AG04450 (cell line): ENCODE measurements at regions of chr3 and their contacts with region 1.

Region 1: DNA sequence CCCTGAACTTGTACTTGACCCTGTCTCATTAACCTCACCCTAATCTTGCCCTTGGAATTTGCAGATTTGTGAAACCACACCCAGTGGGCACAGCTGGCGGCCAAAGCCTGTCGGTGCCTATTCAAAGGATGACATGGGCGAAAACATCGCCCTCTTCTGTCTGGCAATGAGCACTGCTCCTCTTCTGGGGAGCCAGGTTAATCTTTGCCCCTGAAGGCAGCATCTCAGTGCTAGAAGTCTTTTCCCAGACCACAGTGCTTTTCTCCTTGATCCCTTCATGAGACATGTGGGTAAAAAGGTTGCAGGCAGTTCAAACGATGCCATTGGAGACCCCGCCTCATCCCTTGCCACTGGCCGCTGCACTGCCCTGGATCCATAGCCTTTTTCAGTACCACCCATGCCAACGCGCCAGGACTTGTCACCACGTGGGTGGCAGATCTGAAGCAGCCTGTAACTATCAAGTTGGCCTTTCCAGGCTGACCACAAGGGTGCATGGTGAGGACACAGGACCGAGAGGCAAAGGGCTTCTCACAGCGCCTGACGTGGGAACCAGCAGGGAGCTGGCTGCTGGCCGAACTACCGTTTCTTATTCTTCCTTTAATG is 6.5 kb upstream of the DNASE1L3 start:
- DNase-seq: no peak
- H3K4me3 ChIP-seq: no peak overlapping the region
- H3K27ac ChIP-seq: no peak overlapping the region
- H3K27me3 ChIP-seq: peaks cover 20% of the 10 kb centered on the region
- CTCF ChIP-seq: peak; percentile 86

Region 2: DNA sequence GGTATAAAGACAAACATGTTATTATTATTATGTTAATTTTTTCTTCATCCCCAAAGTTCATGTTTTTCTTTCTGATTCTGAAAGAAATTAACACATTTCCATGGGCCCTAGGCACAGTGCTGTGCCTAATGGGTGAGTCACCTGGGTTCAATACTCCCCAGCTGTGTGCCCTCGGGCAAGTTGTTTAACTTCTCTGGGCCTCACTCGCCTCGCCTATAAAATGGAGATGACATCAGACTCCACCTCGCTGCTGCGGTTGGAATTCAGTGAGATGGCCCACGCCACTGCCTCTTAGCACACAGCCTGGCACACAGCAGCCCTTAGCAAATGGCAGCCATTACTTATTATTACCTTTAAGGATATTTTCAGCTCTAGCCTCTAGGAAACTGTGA is 29.1 kb before region 1 on chr3:
- CTCF ChIA-PET with region 1: interaction called, 50 read pairs
- POLR2A ChIA-PET with region 1: interaction called, 3 read pairs
- DNase-seq: no peak
- H3K4me3 ChIP-seq: no peak overlapping the region
- H3K27ac ChIP-seq: no peak overlapping the region
- H3K27me3 ChIP-seq: peaks cover 2% of the 10 kb centered on the region
- CTCF ChIP-seq: no peak

Region 3: DNA sequence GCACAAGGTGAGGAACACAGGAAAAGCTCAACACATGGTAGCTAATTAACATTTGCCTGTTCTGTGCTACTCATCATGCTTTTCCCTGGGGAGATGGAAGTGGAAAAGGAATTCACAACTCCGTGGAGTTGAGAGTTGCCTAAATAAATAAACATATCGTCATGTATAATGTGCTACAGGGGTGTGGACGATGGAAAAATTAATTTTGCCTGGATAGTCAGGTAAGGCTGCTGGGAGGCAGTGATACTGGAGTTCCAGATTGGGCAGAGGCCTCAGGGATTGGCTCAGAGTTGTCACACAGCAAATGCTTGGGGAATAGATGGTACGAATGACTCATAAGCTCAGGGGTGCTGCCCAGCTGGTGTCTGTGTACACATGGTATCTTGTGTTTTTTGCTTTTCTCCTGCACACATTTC is 17.2 kb after region 1 on chr3:
- CTCF ChIA-PET with region 1: interaction called, 60 read pairs
- POLR2A ChIA-PET with region 1: no interaction called
- DNase-seq: peak; percentile 21
- H3K4me3 ChIP-seq: no peak overlapping the region
- H3K27ac ChIP-seq: no peak overlapping the region
- H3K27me3 ChIP-seq: peaks cover 5% of the 10 kb centered on the region
- CTCF ChIP-seq: no peak

Region 4: GRCh38 chr3:58249358-58250092 is 32.2 kb after region 1 on chr3:
- CTCF ChIA-PET with region 1: interaction called, 10 read pairs
- POLR2A ChIA-PET with region 1: no interaction called
- DNase-seq: no peak
- H3K4me3 ChIP-seq: no peak overlapping the region
- H3K27ac ChIP-seq: peak overlapping the region; percentile 47
- H3K27me3 ChIP-seq: no peaks in the 10 kb centered on the region
- CTCF ChIP-seq: peak; percentile 49